Right cardiac atrium (tissue), 5 donors: ENCODE measurements at regions of chr14 and their contacts with region 1.

Region 1: GRCh38 chr14:94548999-94549985 is 11.9 kb upstream of the SERPINA4 start:
- DNase-seq: peak; percentile 55 to 83 (median 77)
- ATAC-seq: peak; percentile 68 to 82
- H3K4me3 ChIP-seq: no peak overlapping the region
- H3K27ac ChIP-seq: no peak overlapping the region
- H3K4me1 ChIP-seq: no peaks in the 10 kb centered on the region
- H3K27me3 ChIP-seq: no peaks in the 10 kb centered on the region

Region 2: DNA sequence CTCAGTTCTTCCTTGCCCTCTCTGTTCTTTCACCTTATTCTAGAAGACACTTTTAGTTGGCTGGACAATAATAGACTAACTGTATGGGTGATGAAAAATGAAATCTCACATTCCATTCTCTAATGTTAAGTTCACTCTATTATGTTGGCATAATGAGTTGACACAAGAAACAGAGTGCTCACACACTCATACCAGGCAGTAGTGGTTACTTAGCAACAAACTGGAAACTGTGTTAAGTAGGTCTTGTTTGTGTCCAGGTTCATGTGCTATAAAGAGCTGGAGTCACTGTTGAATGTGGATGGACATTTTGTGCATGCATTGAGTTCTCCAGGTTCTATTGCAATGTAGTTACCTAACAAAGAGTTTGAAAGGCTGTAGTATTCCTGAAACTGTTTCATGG is 392.1 kb before region 1 on chr14:
- intact Hi-C with region 1: no loop called
- DNase-seq: no peak
- ATAC-seq: peak; percentile 23 to 81
- H3K4me3 ChIP-seq: no peak overlapping the region
- H3K27ac ChIP-seq: no peak overlapping the region
- H3K4me1 ChIP-seq: no peaks in the 10 kb centered on the region
- H3K27me3 ChIP-seq: no peaks in the 10 kb centered on the region

Region 3: DNA sequence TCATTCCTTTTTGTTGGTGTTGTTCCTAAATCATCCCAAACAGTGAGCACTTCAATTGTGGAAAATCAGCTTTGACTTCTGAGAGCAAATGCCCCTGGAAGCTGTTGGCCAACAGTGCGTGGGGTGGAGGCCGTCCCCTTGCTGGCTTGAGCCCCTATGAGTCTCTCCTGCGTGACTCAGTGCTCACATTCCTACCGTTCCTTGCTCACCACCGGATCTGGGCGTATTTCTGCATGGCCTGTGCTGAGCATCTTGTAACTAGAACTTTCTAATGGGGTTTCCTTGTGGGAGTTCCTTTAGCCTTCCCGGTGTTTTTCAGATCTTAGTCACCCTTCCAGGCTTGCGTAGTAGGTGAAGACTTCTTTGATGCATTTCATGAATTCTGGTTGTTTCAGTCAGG is 175.6 kb before region 1 on chr14:
- intact Hi-C with region 1: no loop called
- DNase-seq: no peak
- ATAC-seq: no peak
- H3K4me3 ChIP-seq: no peak overlapping the region
- H3K27ac ChIP-seq: no peak overlapping the region
- H3K4me1 ChIP-seq: no peaks in the 10 kb centered on the region
- H3K27me3 ChIP-seq: no peaks in the 10 kb centered on the region

Region 4: GRCh38 chr14:94423453-94424056 is 125.7 kb before region 1 on chr14:
- intact Hi-C with region 1: loop called in 1 of 4 experiments (anchors 10 kb)
- DNase-seq: peak; percentile 66 to 86 (median 82)
- ATAC-seq: peak; percentile 59 to 63
- H3K4me3 ChIP-seq: no peak overlapping the region
- H3K27ac ChIP-seq: no peak overlapping the region
- H3K4me1 ChIP-seq: no peaks in the 10 kb centered on the region
- H3K27me3 ChIP-seq: no peaks in the 10 kb centered on the region

Region 5: GRCh38 chr14:94761348-94761996 is 212.2 kb after region 1 on chr14:
- intact Hi-C with region 1: no loop called
- DNase-seq: no peak
- ATAC-seq: no peak
- H3K4me3 ChIP-seq: no peak overlapping the region
- H3K27ac ChIP-seq: no peak overlapping the region
- H3K4me1 ChIP-seq: no peaks in the 10 kb centered on the region
- H3K27me3 ChIP-seq: no peaks in the 10 kb centered on the region